MCF 10A (cell line): ENCODE measurements at regions of chr3 and their contacts with region 1.

Region 1: GRCh38 chr3:50298836-50299637 is at the starts of genes HYAL3 and NAA80:
- DNase-seq: peak; percentile 99
- H3K4me3 Mint-ChIP-seq: peak within 1 kb of the TSS; percentile 92
- H3K27ac Mint-ChIP-seq: peak within 1 kb of the TSS; percentile 97
- H3K4me1 Mint-ChIP-seq: peaks cover 7% of the 10 kb centered on the region
- H3K27me3 Mint-ChIP-seq: no peaks in the 10 kb centered on the region
- CTCF ChIP-seq: peak; percentile 23
- total RNA-seq, gene HYAL3: 2.3 and 4.7 TPM in 2 replicates
- total RNA-seq, gene NAA80: 11.4 and 12.4 TPM in 2 replicates

Region 2: GRCh38 chr3:50154840-50155474 is 144.1 kb before region 1 on chr3 and contains the start of gene SEMA3F:
- CTCF ChIA-PET with region 1: no interaction called
- POLR2A ChIA-PET with region 1: no interaction called
- intact Hi-C with region 1: no loop called
- DNase-seq: peak; percentile 78
- H3K4me3 Mint-ChIP-seq: peak within 1 kb of the TSS; percentile 84
- H3K27ac Mint-ChIP-seq: peak within 1 kb of the TSS; percentile 61
- H3K4me1 Mint-ChIP-seq: peaks cover 63% of the 10 kb centered on the region
- H3K27me3 Mint-ChIP-seq: no peaks in the 10 kb centered on the region
- CTCF ChIP-seq: peak; percentile 44
- total RNA-seq, gene SEMA3F: 34.6 and 51.5 TPM in 2 replicates

Region 3: DNA sequence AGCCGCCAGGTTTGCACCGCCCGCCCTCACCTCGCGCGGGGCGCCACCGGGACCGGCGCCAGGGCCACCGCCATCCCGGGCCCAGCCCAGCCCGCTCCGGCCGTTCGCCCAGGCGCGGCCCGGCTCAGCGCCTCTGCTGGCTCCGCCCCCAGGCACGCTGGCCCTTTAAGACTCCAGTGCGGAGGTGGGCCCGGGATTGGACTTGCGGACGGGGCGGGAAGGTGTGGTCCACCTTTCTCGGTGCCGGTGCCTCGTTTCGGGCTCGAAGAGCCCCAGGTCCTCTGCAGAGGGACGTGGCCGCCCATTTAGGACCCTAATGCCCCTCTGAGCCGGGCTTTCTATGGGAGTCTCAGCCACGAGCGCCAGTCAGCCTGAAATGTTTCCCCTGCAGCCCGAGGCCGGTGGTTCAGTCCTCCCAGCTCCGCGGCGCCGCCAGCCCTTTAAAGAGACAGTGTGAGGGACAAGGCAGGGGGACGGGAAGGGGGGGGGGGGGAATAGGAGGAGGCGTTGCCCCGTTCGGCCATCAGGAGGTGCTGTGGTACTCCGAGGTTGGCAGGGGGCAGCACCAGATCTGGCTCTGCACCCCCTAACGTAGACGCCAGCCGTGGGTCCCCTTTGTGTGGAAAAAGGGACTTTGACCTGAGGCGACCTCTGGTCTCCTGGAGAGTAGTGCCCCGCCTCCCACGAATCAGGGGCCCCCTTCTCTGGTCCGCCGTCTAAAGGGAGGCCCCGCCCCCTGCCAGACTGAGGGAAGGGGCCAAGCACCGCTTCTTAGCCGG is 22.5 kb after region 1 on chr3:
- CTCF ChIA-PET with region 1: interaction called, 30 read pairs
- POLR2A ChIA-PET with region 1: interaction called, 30 read pairs
- intact Hi-C with region 1: loop called (anchors 1 kb)
- DNase-seq: peak; percentile 89
- H3K4me3 Mint-ChIP-seq: peak overlapping the region; percentile 80
- H3K27ac Mint-ChIP-seq: peak overlapping the region; percentile 98
- H3K4me1 Mint-ChIP-seq: peaks cover 17% of the 10 kb centered on the region
- H3K27me3 Mint-ChIP-seq: no peaks in the 10 kb centered on the region
- CTCF ChIP-seq: peak; percentile 38

Region 4: GRCh38 chr3:50327943-50328691 is 29.1 kb after region 1 on chr3 and contains the start of gene TUSC2:
- CTCF ChIA-PET with region 1: interaction called, 30 read pairs
- POLR2A ChIA-PET with region 1: interaction called, 24 read pairs
- intact Hi-C with region 1: no loop called
- DNase-seq: peak; percentile 97
- H3K4me3 Mint-ChIP-seq: peak within 1 kb of the TSS; percentile 86
- H3K27ac Mint-ChIP-seq: peak within 1 kb of the TSS; percentile 90
- H3K4me1 Mint-ChIP-seq: no peaks in the 10 kb centered on the region
- H3K27me3 Mint-ChIP-seq: no peaks in the 10 kb centered on the region
- CTCF ChIP-seq: no peak
- total RNA-seq, gene TUSC2: 14.5 and 20.4 TPM in 2 replicates